ENCODE measurements at regions of chr5 and their contacts with region 1.

Region 1: DNA sequence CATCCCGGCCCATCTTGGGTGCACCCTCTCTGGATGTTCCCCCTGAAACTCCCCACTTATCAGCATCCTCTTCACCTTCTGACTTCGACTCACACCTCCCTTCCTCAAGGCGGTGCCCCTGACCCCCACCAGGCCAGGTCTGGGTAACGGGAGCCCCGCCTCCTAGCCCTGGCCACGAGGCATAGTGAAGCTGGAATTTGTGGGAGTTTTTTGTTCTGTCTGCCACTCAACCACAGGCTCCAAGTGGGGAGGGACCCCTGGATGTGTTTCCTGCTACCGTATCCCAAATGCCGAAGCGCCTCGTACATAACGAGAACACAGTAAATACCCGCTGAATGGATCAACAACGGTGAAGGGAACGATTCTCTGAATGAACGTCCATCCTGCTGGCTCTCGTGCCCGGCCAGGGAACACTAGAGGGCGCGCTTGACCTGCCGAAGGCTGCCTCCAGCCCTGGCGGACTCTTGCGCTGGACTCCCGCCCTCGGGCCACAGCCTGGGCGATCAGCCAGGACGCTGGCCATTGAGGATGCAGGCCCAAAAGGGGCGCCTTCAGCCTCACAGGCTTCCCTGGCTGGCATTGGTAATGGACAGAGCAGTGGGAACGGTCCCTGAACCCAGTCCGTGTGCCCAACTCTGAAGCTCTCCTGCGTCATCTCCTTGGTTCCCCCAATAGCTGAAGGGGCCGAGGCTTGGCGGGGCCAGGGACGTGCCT is 47.3 kb upstream of the PHYKPL start:
- DNase-seq: peak; percentile 89 to 93
- ATAC-seq: peak; percentile 87 to 97 (median 93)
- H3K4me3 ChIP-seq: no peak overlapping the region
- H3K27ac ChIP-seq: no peak overlapping the region
- H3K4me1 ChIP-seq: peaks cover 0 to 16% (median 4%) of the 10 kb centered on the region in 9 donors
- H3K27me3 ChIP-seq: peaks cover 0 to 21% (median 3%) of the 10 kb centered on the region in 7 donors
- CTCF ChIP-seq: peak; percentile 87 to 98 (median 96)

Region 2: GRCh38 chr5:178453224-178453623 is 173.3 kb after region 1 on chr5:
- intact Hi-C with region 1: loop called in 2 of 10 experiments (anchors 5 to 10 kb)
- DNase-seq: no peak
- ATAC-seq: no peak
- H3K4me3 ChIP-seq: no peak overlapping the region
- H3K27ac ChIP-seq: no peak overlapping the region
- H3K4me1 ChIP-seq: peaks cover 0 to 11% (median 5%) of the 10 kb centered on the region in 9 donors
- H3K27me3 ChIP-seq: peaks cover 0 to 16% (median 11%) of the 10 kb centered on the region in 7 donors
- CTCF ChIP-seq: no peak

Region 3: DNA sequence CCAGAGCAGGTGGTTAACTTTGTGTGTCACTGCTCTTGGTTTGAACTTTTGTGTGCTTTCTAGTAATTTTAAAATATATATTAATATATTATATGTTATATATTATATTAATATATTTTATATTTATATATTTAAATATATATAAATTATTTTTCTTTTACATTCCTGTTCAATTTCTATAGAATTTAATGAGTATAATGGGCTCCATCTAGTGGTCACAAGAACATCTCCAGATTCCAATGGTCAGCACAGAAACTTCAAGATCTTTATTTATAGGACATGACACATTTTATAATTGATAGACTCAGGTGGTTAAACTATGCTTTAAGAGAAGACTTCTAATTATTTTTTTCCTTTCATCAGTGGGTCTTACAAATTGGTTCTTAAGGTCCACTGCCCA is 271.2 kb after region 1 on chr5:
- intact Hi-C with region 1: loop called (anchors 1 to 5 kb)
- DNase-seq: no peak
- ATAC-seq: no peak
- H3K4me3 ChIP-seq: no peak overlapping the region
- H3K27ac ChIP-seq: no peak overlapping the region
- H3K4me1 ChIP-seq: peaks cover 4 to 21% (median 11%) of the 10 kb centered on the region in 9 donors
- H3K27me3 ChIP-seq: peaks cover 0 to 9% (median 0%) of the 10 kb centered on the region in 7 donors
- CTCF ChIP-seq: peak in 8 of 9 donors; percentile 27 to 74 (median 60)

Region 4: DNA sequence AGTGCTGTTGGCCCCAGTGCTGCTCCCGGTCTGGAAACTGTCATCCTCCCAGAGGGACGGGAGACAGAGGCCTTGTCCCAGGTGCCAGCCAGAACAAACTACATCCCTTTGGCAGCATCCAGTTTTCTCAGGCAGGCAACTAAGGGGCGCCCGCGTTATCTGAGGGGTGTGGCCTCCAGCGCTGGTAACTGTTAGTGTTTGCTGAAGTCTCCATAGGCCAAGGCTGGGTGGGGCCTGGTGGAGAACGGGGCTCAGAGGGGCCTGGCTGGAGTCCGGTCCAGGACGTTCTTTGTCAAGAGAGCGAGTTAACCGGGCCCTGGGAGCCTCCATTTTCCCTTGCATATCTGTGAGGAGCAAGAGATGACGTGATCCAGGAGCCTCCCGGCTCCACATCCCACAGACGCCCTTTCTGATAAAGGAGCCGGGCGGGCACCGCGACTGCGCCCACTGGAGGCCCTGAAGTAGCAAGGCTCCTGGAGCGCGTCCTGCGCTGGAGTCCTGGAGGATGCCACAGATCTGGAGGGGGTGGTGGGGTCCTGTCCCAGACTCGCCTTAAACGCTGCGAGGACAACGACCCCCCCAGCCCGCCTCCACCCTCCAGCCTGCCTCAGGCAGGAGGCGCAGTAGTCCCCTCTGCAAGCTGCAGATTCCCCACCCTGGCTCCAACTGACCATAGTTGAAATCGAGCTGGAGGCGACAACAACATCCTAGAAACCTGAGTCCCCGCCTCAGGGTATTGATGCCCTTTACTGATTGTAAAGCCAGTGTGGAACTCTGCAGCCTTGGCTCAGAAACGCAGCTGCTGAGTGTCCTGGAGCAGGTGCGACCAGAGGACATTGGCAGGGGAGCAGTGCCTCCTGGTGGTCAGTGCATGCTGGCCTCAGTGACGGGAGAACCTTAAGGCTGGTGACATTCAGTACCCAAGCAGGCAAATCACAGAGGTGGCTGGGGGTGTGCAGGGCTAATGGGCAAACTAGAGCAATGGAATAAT is 559.1 kb after region 1 on chr5:
- intact Hi-C with region 1: loop called in 4 of 10 experiments (anchors 5 to 10 kb)
- DNase-seq: peak in 1 of 2 donors; percentile 63
- ATAC-seq: peak; percentile 73 to 93 (median 86)
- H3K4me3 ChIP-seq: no peak overlapping the region
- H3K27ac ChIP-seq: no peak overlapping the region
- H3K4me1 ChIP-seq: no peaks in the 10 kb centered on the region
- H3K27me3 ChIP-seq: peaks cover 0 to 5% (median 0%) of the 10 kb centered on the region in 7 donors
- CTCF ChIP-seq: peak in 7 of 9 donors; percentile 45 to 79 (median 65)

Region 5: GRCh38 chr5:179495906-179496455 is 1216.1 kb after region 1 on chr5:
- intact Hi-C with region 1: loop called in 1 of 10 experiments (anchors 5 kb)
- DNase-seq: no peak
- ATAC-seq: no peak
- H3K4me3 ChIP-seq: no peak overlapping the region
- H3K27ac ChIP-seq: no peak overlapping the region
- H3K4me1 ChIP-seq: no peaks in the 10 kb centered on the region
- H3K27me3 ChIP-seq: peaks cover 0 to 34% (median 9%) of the 10 kb centered on the region in 7 donors
- CTCF ChIP-seq: no peak